Activated CD4-positive, alpha-beta T cell treated with anti-CD3 and anti-CD28 coated beads for 36 hours (primary cell): ENCODE measurements at regions of chr11 and their contacts with region 1.

Region 1: DNA sequence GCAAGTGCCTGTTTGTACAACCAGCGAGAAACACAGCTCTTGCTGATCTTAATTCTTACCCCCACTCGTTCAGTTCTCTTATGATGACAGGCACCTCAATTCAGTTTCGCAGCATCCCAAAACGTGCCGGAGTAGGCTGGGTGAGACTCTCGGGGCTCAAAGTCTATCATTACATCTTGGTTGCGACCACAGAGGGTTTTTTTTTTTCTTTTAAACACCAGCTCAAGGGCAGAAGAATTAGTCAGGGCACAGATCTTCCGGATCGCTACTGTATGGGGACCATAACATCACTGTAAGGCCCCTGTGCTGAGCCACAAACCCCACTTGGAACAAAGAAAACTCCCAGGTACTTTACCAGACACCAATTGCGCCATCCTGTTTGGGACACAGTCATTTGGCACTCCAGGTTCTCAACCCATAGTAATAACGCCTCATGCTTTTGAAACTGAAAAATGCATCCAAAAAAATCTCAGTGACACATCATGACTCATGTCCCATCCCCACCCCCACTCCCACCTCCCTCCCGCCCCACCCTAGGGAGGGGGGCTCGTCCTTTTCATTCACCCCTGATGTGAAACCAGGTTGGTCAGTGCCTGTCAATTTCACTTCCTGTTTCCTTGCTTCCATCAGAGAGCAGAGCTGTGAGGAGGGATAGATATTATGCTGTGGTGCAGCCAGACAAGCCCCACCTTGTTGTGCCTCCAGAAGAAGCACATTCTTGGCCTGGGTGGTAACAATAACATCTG is 41.0 kb upstream of the CD5 start:
- DNase-seq: peak; percentile 93
- ATAC-seq: peak; percentile 79
- H3K4me3 Mint-ChIP-seq: peak overlapping the region; percentile 51
- H3K27ac Mint-ChIP-seq: peak overlapping the region; percentile 96
- H3K4me1 Mint-ChIP-seq: peaks cover 94% of the 10 kb centered on the region
- H3K27me3 Mint-ChIP-seq: no peaks in the 10 kb centered on the region

Region 2: GRCh38 chr11:60913793-60914632 is 147.2 kb before region 1 on chr11 and contains the start of gene TMEM109:
- CTCF ChIA-PET with region 1: no interaction called
- POLR2A ChIA-PET with region 1: interaction called, 3 read pairs
- intact Hi-C with region 1: loop called in 1 of 2 experiments (anchors 5 kb)
- DNase-seq: peak; percentile 93
- ATAC-seq: peak; percentile 78
- H3K4me3 Mint-ChIP-seq: peak within 1 kb of the TSS; percentile 87
- H3K27ac Mint-ChIP-seq: peak within 1 kb of the TSS; percentile 97
- H3K4me1 Mint-ChIP-seq: peaks cover 58% of the 10 kb centered on the region
- H3K27me3 Mint-ChIP-seq: no peaks in the 10 kb centered on the region
- total RNA-seq, gene TMEM109: 80.3 to 89.1 TPM

Region 3: GRCh38 chr11:60992842-60993409 is 68.3 kb before region 1 on chr11:
- CTCF ChIA-PET with region 1: interaction called, 3 read pairs
- POLR2A ChIA-PET with region 1: interaction called, 49 read pairs
- intact Hi-C with region 1: loop called (anchors 1 kb)
- DNase-seq: peak; percentile 18
- ATAC-seq: no peak
- H3K4me3 Mint-ChIP-seq: peak overlapping the region; percentile 61
- H3K27ac Mint-ChIP-seq: peak overlapping the region; percentile 97
- H3K4me1 Mint-ChIP-seq: peaks cover 83% of the 10 kb centered on the region
- H3K27me3 Mint-ChIP-seq: no peaks in the 10 kb centered on the region

Region 4: GRCh38 chr11:61041755-61042518 is 19.3 kb before region 1 on chr11:
- CTCF ChIA-PET with region 1: interaction called, 14 read pairs
- POLR2A ChIA-PET with region 1: interaction called, 16 read pairs
- intact Hi-C with region 1: loop called (anchors 1 to 2 kb)
- DNase-seq: peak; percentile 92
- ATAC-seq: peak; percentile 94
- H3K4me3 Mint-ChIP-seq: peak overlapping the region; percentile 64
- H3K27ac Mint-ChIP-seq: peak overlapping the region; percentile 91
- H3K4me1 Mint-ChIP-seq: peaks cover 72% of the 10 kb centered on the region
- H3K27me3 Mint-ChIP-seq: no peaks in the 10 kb centered on the region

Region 5: GRCh38 chr11:61083601-61084147 is 22.4 kb after region 1 on chr11:
- CTCF ChIA-PET with region 1: interaction called, 64 read pairs
- POLR2A ChIA-PET with region 1: interaction called, 23 read pairs
- intact Hi-C with region 1: loop called (anchors 2 kb)
- DNase-seq: peak; percentile 86
- ATAC-seq: peak; percentile 66
- H3K4me3 Mint-ChIP-seq: peak overlapping the region; percentile 87
- H3K27ac Mint-ChIP-seq: peak overlapping the region; percentile 99
- H3K4me1 Mint-ChIP-seq: peaks cover 64% of the 10 kb centered on the region
- H3K27me3 Mint-ChIP-seq: no peaks in the 10 kb centered on the region

Region 6: DNA sequence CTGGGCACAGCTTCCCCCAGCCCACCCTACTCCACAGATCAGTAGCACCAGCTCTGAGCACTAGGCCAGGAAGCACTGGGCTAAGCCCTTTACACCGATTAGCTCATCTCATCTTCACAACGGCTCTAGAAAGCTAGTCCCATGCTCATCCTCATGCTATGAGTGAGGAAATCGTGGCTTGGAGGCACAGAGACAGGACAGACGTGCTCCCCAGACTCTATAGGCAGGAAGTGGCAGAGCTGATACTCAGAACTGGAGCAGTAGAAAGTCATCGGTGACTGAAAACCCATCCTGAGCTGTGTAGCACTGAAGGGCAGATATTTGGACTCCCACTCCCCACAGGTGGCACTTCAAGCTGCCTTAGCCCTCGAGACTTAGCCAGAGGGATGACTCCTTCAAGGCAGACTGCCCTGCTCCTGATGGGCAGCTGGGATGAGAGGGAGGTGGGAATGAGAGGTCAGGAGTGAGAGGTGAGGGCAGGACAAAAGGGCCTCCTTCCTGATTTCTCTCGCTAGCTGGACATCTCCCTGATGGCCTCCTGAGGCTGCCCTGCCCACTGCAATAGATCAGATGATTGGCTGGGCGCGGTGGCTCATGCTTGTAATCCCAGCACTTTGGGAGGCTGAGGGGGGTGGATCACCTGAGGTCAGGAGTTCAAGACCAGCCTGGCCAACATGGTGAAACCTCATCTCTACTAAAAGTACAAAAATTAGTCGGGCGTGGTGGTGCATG is 50.7 kb after region 1 on chr11:
- CTCF ChIA-PET with region 1: interaction called, 12 read pairs
- POLR2A ChIA-PET with region 1: interaction called, 14 read pairs
- intact Hi-C with region 1: loop called (anchors 1 to 2 kb)
- DNase-seq: peak; percentile 86
- ATAC-seq: peak; percentile 90
- H3K4me3 Mint-ChIP-seq: no peak overlapping the region
- H3K27ac Mint-ChIP-seq: no peak overlapping the region
- H3K4me1 Mint-ChIP-seq: peaks cover 99% of the 10 kb centered on the region
- H3K27me3 Mint-ChIP-seq: no peaks in the 10 kb centered on the region

Region 7: DNA sequence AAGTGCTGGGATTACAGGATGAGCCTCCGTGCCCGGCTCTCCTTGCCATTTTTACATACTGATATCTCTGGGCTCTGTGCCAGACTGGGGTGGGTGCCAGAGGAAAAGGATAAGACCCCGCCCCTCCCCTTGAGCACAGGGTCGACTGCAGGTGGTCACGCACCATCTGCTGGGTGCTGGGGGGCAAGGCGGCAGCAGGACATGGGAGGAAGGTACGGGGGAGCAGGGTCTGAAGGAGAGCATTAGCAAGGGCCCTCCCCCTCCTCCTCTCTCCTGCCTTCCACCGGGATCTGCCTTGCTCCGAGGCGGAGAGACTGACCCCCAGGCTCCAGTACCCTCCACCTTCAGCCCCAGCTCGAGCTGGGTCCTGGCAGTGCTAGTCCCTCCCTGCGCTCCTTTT is 132.3 kb after region 1 on chr11:
- CTCF ChIA-PET with region 1: no interaction called
- POLR2A ChIA-PET with region 1: no interaction called
- intact Hi-C with region 1: no loop called
- DNase-seq: no peak
- ATAC-seq: no peak
- H3K4me3 Mint-ChIP-seq: no peak overlapping the region
- H3K27ac Mint-ChIP-seq: no peak overlapping the region
- H3K4me1 Mint-ChIP-seq: no peaks in the 10 kb centered on the region
- H3K27me3 Mint-ChIP-seq: peaks cover 10% of the 10 kb centered on the region

Region 8: DNA sequence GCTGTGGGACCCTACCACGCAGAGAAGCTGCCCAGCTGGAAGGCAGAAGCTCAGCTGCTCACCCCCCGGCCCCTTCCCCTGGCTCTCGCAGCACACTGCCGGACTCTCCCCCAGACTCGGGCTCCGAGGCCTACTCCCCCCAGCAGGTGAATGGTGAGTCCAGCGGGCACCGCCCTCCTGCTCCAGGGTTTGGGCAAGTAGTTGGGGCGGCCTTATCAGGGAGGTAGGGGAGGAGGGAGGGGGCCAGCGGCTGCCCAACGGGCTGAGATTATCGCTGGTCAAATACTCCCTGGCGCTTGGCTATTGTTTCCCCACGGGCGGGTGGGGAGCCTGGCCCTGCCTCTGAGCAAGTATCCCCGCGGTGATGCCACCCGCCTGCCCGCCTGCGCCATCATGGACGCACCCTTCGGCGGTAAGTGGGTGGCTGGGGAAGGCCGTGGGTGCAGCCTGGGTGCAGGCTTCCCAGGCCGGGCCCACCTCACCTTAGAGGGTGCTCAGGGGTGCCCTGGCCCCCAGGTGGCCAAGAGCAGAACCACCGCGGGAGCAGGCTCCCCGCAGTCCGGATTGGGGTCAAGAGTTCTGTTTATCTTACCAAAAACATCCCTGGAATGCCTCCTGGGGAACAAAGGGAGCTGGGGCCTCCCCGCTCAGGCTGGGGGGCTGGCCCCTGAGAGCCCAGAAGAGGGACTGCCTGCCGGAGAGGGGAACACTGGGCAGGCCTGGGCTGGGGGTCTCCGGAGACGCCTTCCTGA is 708.1 kb after region 1 on chr11:
- CTCF ChIA-PET with region 1: no interaction called
- POLR2A ChIA-PET with region 1: no interaction called
- intact Hi-C with region 1: no loop called
- DNase-seq: no peak
- ATAC-seq: no peak
- H3K4me3 Mint-ChIP-seq: no peak overlapping the region
- H3K27ac Mint-ChIP-seq: no peak overlapping the region
- H3K4me1 Mint-ChIP-seq: no peaks in the 10 kb centered on the region
- H3K27me3 Mint-ChIP-seq: no peaks in the 10 kb centered on the region